ENCODE measurements at regions of chr4 and their contacts with region 1.

Region 1: DNA sequence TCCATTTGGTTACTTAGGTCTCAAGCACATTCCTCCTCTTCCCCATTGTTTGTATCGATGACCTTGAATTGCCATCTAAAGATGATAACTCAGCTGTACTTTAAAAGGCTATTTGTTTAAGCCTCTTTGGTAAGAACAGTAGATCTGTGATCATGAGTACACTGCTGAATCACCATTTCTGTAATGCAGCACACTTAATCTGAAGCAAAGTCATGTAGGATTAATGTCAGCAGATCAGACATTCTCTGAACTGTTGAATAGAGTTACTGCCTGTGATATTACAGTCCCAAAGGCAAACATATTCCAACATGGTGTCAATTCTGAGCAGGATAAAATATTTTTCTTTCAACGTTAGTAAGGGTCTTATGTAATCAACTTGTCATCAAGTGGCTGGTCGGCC is 631.6 kb downstream of the TECRL start:
- DNase-seq: no peak
- H3K4me3 ChIP-seq: no peak overlapping the region
- H3K27ac ChIP-seq: no peak overlapping the region
- H3K4me1 ChIP-seq: no peaks in the 10 kb centered on the region
- H3K27me3 ChIP-seq: no peaks in the 10 kb centered on the region
- CTCF ChIP-seq: no peak

Region 2: DNA sequence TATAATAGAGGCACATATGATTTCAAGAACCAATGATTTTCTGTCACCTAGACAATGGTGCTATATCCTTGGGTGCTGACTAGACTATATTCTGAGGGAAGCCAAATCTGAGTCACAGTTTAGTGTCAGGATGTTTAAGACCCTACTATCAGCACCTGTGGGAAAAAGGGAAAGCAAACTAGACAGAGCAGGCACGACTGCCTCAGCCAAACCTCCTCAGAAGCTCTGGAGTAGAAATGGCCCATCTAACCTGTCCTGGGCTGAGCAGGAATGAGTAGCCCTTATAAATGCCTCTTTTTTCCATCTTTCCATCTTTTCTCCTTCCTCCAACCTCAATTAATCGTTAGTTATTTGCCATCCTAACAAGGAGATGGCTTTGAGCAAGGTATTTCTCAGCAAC is 712.0 kb after region 1 on chr4:
- intact Hi-C with region 1: loop called (anchors 5 kb)
- DNase-seq: no peak
- H3K4me3 ChIP-seq: no peak overlapping the region
- H3K27ac ChIP-seq: no peak overlapping the region
- H3K4me1 ChIP-seq: no peaks in the 10 kb centered on the region
- H3K27me3 ChIP-seq: no peaks in the 10 kb centered on the region
- CTCF ChIP-seq: no peak